CD8-positive, alpha-beta T cell (primary cell): ENCODE measurements at regions of chr7 and their contacts with region 1.

Region 1: GRCh38 chr7:115952832-115953231 is 77.7 kb downstream of the TFEC start:
- DNase-seq: peak in 1 of 9 experiments; percentile 10
- ATAC-seq: no peak
- H3K4me3 ChIP-seq: no peak overlapping the region
- H3K4me3 Mint-ChIP-seq: no peak overlapping the region
- H3K27ac ChIP-seq: no peak overlapping the region
- H3K27ac Mint-ChIP-seq: no peak overlapping the region
- H3K4me1 ChIP-seq: no peaks in the 10 kb centered on the region
- H3K4me1 Mint-ChIP-seq: no peaks in the 10 kb centered on the region
- H3K27me3 ChIP-seq: no peaks in the 10 kb centered on the region
- H3K27me3 Mint-ChIP-seq: no peaks in the 10 kb centered on the region
- CTCF ChIP-seq: no peak

Region 2: DNA sequence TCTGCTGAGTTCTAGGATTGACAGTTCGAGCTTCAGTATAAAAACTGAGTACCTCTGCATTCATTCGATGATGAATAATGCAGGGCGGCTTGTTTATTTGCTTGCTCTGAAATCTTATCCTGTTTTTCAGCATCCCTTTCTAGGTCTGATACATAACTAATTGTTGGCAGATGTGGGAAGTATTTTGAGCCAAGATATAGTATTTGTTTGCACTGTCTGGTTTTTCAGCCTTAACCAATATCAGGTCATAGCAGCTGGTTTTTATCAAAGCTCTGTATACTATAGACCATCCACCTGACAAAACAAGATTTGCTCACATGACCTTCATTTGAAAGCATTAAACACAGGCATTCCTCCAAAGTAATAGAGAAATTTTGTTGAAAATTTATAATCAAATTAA is 83.6 kb before region 1 on chr7:
- CTCF ChIA-PET with region 1: no interaction called
- POLR2A ChIA-PET with region 1: no interaction called
- intact Hi-C with region 1: no loop called
- DNase-seq: no peak
- ATAC-seq: no peak
- H3K4me3 ChIP-seq: no peak overlapping the region
- H3K4me3 Mint-ChIP-seq: no peak overlapping the region
- H3K27ac ChIP-seq: no peak overlapping the region
- H3K27ac Mint-ChIP-seq: no peak overlapping the region
- H3K4me1 ChIP-seq: no peaks in the 10 kb centered on the region
- H3K4me1 Mint-ChIP-seq: no peaks in the 10 kb centered on the region
- H3K27me3 ChIP-seq: no peaks in the 10 kb centered on the region
- H3K27me3 Mint-ChIP-seq: no peaks in the 10 kb centered on the region
- CTCF ChIP-seq: no peak

Region 3: DNA sequence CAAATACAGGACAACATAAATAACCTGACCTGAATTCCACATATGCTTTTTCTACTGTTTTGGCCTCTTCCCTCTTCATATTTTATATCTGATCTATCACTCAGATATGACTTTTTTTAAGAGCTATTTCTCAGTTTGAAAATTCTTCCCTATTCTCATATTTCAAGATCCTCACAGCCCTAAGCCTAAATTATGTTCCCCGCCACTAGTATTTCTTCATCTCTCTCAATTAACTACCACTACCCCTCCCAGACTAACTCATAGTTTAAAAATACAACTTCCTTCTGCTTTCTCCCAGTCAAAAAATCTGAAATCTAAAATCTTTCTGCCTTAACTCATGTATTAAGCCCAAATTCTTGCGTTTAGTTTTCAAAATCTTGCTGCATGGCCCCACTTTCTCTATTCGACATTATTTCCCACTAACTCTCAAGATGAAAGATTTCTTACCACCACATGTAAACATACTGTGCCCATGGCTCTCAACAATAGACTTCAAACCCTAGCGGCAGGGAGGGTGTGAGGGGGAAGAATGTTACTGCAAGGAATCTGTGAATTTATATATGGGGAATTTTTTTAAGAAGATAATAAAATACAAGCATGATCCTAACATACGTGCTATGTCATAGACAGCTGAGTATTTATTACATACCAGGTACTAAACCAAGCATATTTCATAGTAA is 13.1 kb after region 1 on chr7:
- CTCF ChIA-PET with region 1: no interaction called
- POLR2A ChIA-PET with region 1: no interaction called
- intact Hi-C with region 1: loop called in 1 of 2 experiments (anchors 1 kb)
- DNase-seq: no peak
- ATAC-seq: no peak
- H3K4me3 ChIP-seq: no peak overlapping the region
- H3K4me3 Mint-ChIP-seq: no peak overlapping the region
- H3K27ac ChIP-seq: no peak overlapping the region
- H3K27ac Mint-ChIP-seq: no peak overlapping the region
- H3K4me1 ChIP-seq: no peaks in the 10 kb centered on the region
- H3K4me1 Mint-ChIP-seq: no peaks in the 10 kb centered on the region
- H3K27me3 ChIP-seq: no peaks in the 10 kb centered on the region
- H3K27me3 Mint-ChIP-seq: no peaks in the 10 kb centered on the region
- CTCF ChIP-seq: no peak

Region 4: DNA sequence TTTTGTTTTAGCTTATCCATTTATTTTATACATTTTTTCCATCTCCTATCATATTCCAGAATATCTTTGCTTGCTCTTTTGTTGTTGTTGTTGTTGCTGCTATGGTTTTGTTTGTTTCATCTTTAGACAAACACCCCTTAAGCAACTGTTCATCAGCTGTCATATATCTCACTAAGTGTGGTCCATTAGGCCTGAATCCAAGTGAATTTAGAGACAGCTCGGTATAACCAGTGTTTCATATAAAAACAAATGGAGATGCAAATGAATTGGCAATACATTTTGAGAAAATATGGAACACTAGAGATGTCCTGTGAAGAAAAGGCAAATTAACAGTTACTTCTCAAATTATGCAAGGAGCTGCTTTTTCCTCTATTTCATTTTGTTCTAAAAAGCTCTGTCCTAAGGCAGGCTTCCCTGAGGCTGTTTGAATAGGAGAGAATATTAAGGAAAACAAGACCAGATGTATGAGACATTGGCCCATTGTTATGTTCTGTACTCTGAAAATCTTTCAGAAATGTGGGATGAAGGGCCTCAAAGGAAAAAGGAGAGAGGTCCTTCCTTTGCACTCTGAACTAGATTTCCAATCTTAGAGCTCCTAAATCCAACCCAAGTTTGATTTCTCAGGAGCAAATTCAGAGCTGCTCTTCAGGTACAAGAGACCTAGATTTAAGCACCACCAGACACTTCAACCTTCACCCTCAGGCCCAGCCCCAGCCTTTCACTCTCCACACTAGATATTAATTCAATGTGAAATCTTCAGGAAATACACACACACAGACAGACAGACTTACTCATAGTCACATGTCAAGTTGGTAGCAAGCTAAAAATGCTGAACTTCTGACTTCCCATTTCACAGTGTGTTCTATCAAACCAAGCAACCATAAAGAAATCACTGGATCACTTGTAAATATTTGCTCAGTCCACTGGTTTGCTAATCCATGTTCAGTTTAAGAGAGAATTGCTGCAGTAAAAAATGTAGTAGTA is 72.3 kb after region 1 on chr7:
- CTCF ChIA-PET with region 1: no interaction called
- POLR2A ChIA-PET with region 1: no interaction called
- intact Hi-C with region 1: no loop called
- DNase-seq: peak in 1 of 9 experiments; percentile 10
- ATAC-seq: no peak
- H3K4me3 ChIP-seq: no peak overlapping the region
- H3K4me3 Mint-ChIP-seq: no peak overlapping the region
- H3K27ac ChIP-seq: no peak overlapping the region
- H3K27ac Mint-ChIP-seq: no peak overlapping the region
- H3K4me1 ChIP-seq: no peaks in the 10 kb centered on the region
- H3K4me1 Mint-ChIP-seq: no peaks in the 10 kb centered on the region
- H3K27me3 ChIP-seq: no peaks in the 10 kb centered on the region
- H3K27me3 Mint-ChIP-seq: peaks cover 2% of the 10 kb centered on the region
- CTCF ChIP-seq: no peak